ENCODE measurements at regions of chr16 and their contacts with region 1.

Region 1: GRCh38 chr16:72832621-72833248 is 215.2 kb downstream of the ZFHX3 start:
- DNase-seq: peak in 33 of 35 experiments; percentile 7 to 68 (median 39)
- ATAC-seq: peak; percentile 51 to 73 (median 60)
- H3K4me3 ChIP-seq: no peak overlapping the region
- H3K4me3 Mint-ChIP-seq: no peak overlapping the region
- H3K27ac ChIP-seq: no peak overlapping the region
- H3K27ac Mint-ChIP-seq: no peak overlapping the region
- H3K4me1 ChIP-seq: no peaks in the 10 kb centered on the region
- H3K4me1 Mint-ChIP-seq: no peaks in the 10 kb centered on the region
- H3K27me3 ChIP-seq: no peaks in the 10 kb centered on the region
- H3K27me3 Mint-ChIP-seq: peaks cover 0 to 4% of the 10 kb centered on the region in 2 donors

Region 2: GRCh38 chr16:72367851-72368250 is 464.9 kb before region 1 on chr16:
- CTCF ChIA-PET with region 1: interaction called in 1 of 2 experiments, 14 read pairs
- POLR2A ChIA-PET with region 1: no interaction called
- DNase-seq: no peak
- ATAC-seq: no peak
- H3K4me3 ChIP-seq: no peak overlapping the region
- H3K4me3 Mint-ChIP-seq: no peak overlapping the region
- H3K27ac ChIP-seq: no peak overlapping the region
- H3K27ac Mint-ChIP-seq: no peak overlapping the region
- H3K4me1 ChIP-seq: no peaks in the 10 kb centered on the region
- H3K4me1 Mint-ChIP-seq: no peaks in the 10 kb centered on the region
- H3K27me3 ChIP-seq: no peaks in the 10 kb centered on the region
- H3K27me3 Mint-ChIP-seq: no peaks in the 10 kb centered on the region

Region 3: GRCh38 chr16:73584157-73584556 is 751.4 kb after region 1 on chr16:
- CTCF ChIA-PET with region 1: no interaction called
- POLR2A ChIA-PET with region 1: interaction called in 1 of 2 experiments, 13 read pairs
- DNase-seq: no peak
- ATAC-seq: no peak
- H3K4me3 ChIP-seq: no peak overlapping the region
- H3K4me3 Mint-ChIP-seq: no peak overlapping the region
- H3K27ac ChIP-seq: no peak overlapping the region
- H3K27ac Mint-ChIP-seq: no peak overlapping the region
- H3K4me1 ChIP-seq: no peaks in the 10 kb centered on the region
- H3K4me1 Mint-ChIP-seq: no peaks in the 10 kb centered on the region
- H3K27me3 ChIP-seq: no peaks in the 10 kb centered on the region
- H3K27me3 Mint-ChIP-seq: no peaks in the 10 kb centered on the region